Natural killer cell (primary cell): ENCODE measurements at regions of chr4 and their contacts with region 1.

Region 1: GRCh38 chr4:26320538-26321325 is at the start of gene RBPJ:
- DNase-seq: peak; percentile 82 to 93
- ATAC-seq: peak; percentile 45 to 52 (median 49)
- H3K4me3 ChIP-seq: peak within 1 kb of the TSS; percentile 96
- H3K4me3 Mint-ChIP-seq: peak within 1 kb of the TSS; percentile 100
- H3K27ac ChIP-seq: peak within 1 kb of the TSS; percentile 95
- H3K27ac Mint-ChIP-seq: peak within 1 kb of the TSS; percentile 92 to 96
- H3K4me1 ChIP-seq: peaks cover 27% of the 10 kb centered on the region
- H3K4me1 Mint-ChIP-seq: peaks cover 39 to 49% of the 10 kb centered on the region in 2 donors
- H3K27me3 ChIP-seq: no peaks in the 10 kb centered on the region
- H3K27me3 Mint-ChIP-seq: peaks cover 0 to 14% of the 10 kb centered on the region in 2 donors
- CTCF ChIP-seq: no peak
- total RNA-seq, gene RBPJ: 46.4 to 53.3 (median 48.8) TPM

Region 2: DNA sequence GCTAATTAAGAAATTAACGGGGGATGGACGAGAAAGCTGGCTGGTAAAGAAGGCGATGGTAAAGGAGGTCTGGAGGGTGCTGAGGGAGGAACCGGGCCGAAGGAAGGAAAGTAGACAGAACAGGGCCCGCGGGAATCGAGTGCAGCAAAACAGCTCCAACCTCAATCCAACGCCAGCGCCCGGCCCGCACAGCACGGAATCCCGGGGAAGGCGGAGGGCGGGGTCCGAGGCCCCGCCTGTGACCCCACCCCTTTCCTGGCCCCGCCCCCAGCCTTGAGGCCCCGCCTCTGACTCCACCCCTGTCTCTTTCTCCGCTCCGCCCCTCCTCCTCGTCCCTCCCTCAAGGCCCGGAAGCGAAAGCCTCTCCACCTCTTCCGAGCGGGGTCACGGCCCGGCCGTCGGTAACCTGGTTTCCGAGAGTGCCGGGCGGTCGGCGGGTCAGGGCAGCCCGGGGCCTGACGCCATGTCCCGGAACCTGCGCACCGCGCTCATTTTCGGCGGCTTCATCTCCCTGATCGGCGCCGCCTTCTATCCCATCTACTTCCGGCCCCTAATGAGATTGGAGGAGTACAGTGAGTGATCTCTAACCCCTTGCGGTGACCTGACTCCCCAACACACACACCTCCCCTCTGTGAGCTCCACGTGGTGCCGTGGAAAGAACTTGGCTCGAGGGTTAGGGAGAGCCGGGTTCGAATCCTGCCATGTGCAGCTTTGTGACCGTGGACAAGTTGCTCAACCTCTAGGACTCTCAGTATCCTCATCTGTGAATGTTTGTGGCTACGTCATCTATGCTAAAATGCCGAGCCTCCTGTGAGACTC is 406.7 kb before region 1 on chr4 and contains the start of gene SMIM20:
- intact Hi-C with region 1: loop called (anchors 10 kb)
- DNase-seq: peak; percentile 86 to 95
- ATAC-seq: peak; percentile 96 to 99 (median 96)
- H3K4me3 ChIP-seq: peak within 1 kb of the TSS; percentile 91
- H3K4me3 Mint-ChIP-seq: peak within 1 kb of the TSS; percentile 97
- H3K27ac ChIP-seq: peak within 1 kb of the TSS; percentile 97
- H3K27ac Mint-ChIP-seq: peak within 1 kb of the TSS; percentile 95 to 99
- H3K4me1 ChIP-seq: peaks cover 18% of the 10 kb centered on the region
- H3K4me1 Mint-ChIP-seq: peaks cover 16 to 24% of the 10 kb centered on the region in 2 donors
- H3K27me3 ChIP-seq: no peaks in the 10 kb centered on the region
- H3K27me3 Mint-ChIP-seq: peaks cover 1 to 5% of the 10 kb centered on the region in 2 donors
- CTCF ChIP-seq: no peak
- total RNA-seq, gene SMIM20: 10.3 to 11.5 (median 10.3) TPM

Region 3: GRCh38 chr4:26076000-26076587 is 244.6 kb before region 1 on chr4:
- intact Hi-C with region 1: loop called (anchors 10 kb)
- DNase-seq: peak in 1 of 2 donors; percentile 44
- ATAC-seq: peak; percentile 69 to 78 (median 75)
- H3K4me3 ChIP-seq: no peak overlapping the region
- H3K4me3 Mint-ChIP-seq: peak overlapping the region; percentile 41
- H3K27ac ChIP-seq: peak overlapping the region; percentile 24
- H3K27ac Mint-ChIP-seq: peak overlapping the region; percentile 47 to 59
- H3K4me1 ChIP-seq: peaks cover 6% of the 10 kb centered on the region
- H3K4me1 Mint-ChIP-seq: peaks cover 29 to 35% of the 10 kb centered on the region in 2 donors
- H3K27me3 ChIP-seq: peaks cover 1% of the 10 kb centered on the region
- H3K27me3 Mint-ChIP-seq: peaks cover 11 to 12% of the 10 kb centered on the region in 2 donors
- CTCF ChIP-seq: no peak

Region 4: DNA sequence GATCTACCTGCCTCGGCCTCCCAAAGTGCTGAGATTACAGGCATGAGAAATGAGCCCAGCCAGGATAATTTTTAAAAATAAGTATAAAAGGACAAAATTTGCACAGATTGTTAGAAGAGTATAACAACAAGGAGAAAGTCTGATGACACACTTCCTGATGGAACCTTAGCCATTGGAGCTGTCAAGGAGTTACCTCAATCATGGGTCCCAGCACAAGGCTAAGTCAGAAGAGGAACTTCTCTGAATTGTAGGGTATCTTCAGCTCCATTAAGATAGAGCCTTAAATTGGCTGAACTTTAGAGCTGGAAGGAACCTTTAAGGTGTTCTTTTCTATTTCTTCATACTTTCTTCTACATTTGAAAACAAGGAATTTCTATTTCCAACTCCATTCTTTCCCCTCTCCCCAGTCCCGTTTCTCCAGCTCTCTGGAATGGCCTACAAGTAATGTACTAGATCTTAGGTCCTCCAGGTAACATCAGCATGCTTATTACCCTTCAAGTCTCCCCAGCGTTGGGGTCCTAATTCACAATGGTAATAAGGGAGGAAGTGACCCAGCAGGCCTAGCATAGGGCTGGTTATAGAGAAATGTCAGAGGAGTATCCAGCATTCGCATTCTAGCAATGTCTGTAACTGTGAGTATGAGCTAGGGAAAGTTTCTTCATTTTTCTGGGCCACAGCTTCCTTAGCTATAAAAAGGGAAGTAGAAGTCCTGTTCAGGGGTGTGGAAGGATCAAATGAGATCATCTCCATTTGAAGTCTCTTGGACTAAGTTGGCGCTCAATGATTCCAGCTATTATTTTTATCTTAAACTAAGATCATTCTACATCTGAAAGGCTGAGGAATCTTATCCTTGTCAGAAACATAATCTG is 18.5 kb before region 1 on chr4:
- intact Hi-C with region 1: no loop called
- DNase-seq: no peak
- ATAC-seq: peak in 1 of 3 donors; percentile 50
- H3K4me3 ChIP-seq: no peak overlapping the region
- H3K4me3 Mint-ChIP-seq: no peak overlapping the region
- H3K27ac ChIP-seq: no peak overlapping the region
- H3K27ac Mint-ChIP-seq: no peak overlapping the region
- H3K4me1 ChIP-seq: peaks cover 6% of the 10 kb centered on the region
- H3K4me1 Mint-ChIP-seq: no peaks in the 10 kb centered on the region
- H3K27me3 ChIP-seq: no peaks in the 10 kb centered on the region
- H3K27me3 Mint-ChIP-seq: peaks cover 6 to 9% of the 10 kb centered on the region in 2 donors
- CTCF ChIP-seq: no peak

Region 5: DNA sequence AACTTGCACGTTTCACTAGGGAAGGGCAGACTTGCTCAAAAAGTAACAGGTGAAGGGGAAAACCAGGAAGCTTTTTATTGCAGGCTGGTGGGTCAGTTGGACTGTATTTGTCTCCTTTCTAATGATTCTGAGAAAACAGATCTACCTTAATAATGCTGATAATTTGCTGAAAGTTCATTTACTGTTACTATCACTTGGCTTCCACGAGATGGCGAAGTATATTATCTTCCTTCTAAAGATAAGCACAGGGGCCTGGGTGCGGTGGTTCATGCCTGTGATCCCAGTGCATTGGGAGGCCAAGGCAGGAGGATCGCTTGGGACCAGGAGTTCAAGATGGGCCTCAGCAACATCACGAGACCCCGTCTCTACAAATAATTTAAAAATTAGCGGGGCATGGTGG is 153.2 kb after region 1 on chr4:
- intact Hi-C with region 1: no loop called
- DNase-seq: no peak
- ATAC-seq: no peak
- H3K4me3 ChIP-seq: no peak overlapping the region
- H3K4me3 Mint-ChIP-seq: no peak overlapping the region
- H3K27ac ChIP-seq: no peak overlapping the region
- H3K27ac Mint-ChIP-seq: no peak overlapping the region
- H3K4me1 ChIP-seq: no peaks in the 10 kb centered on the region
- H3K4me1 Mint-ChIP-seq: no peaks in the 10 kb centered on the region
- H3K27me3 ChIP-seq: no peaks in the 10 kb centered on the region
- H3K27me3 Mint-ChIP-seq: peaks cover 7 to 8% of the 10 kb centered on the region in 2 donors
- CTCF ChIP-seq: no peak